A673 (cell line): ENCODE measurements at regions of chr16 and their contacts with region 1.

Region 1: DNA sequence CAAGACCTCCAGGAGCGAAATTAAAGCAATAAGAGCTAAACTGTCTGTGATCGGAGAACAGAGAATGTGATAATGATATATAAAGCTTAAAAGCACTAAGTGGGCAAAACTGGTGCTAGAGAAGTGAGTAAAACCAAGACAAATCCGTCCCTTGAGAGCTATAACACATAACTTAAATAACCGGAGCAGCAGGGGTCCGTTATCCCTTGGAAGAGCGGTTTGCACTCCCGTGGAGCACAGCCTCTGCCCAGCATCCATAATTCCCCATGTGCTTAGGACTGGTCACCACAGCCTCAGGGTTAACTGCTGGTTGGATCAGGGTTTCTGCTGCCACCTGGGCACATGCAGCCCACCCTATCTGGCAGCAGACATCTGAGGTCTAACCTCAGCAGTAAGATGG is 489.0 kb downstream of the NPIPA7 start:
- DNase-seq: peak; percentile 54
- H3K4me3 ChIP-seq: no peak overlapping the region
- H3K27ac ChIP-seq: no peak overlapping the region
- H3K4me1 ChIP-seq: no peaks in the 10 kb centered on the region
- H3K27me3 ChIP-seq: no peaks in the 10 kb centered on the region
- CTCF ChIP-seq: no peak

Region 2: DNA sequence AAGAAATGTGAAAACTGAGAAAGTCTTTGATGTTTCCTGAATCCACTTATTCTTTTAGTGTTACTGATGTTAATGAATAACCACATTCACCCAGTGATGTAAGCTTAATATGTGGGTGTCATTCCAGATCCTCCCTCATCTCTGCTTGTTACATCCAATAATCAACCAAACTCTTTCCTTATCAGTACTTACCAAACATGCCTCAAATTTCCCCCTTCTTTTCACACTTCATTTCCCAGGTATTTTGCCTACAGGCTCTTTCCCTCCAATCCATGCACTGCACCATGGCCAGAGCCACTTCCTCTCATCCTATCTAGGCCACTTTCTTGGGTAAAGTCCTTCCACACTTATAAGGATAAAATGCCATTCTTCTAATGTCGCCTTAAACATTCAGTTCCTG is 37.6 kb before region 1 on chr16:
- CTCF ChIA-PET with region 1: no interaction called
- POLR2A ChIA-PET with region 1: interaction called, 10 read pairs
- intact Hi-C with region 1: no loop called
- DNase-seq: no peak
- H3K4me3 ChIP-seq: no peak overlapping the region
- H3K27ac ChIP-seq: no peak overlapping the region
- H3K4me1 ChIP-seq: no peaks in the 10 kb centered on the region
- H3K27me3 ChIP-seq: no peaks in the 10 kb centered on the region
- CTCF ChIP-seq: no peak